Lower leg skin (tissue), 4 donors: ENCODE measurements at regions of chr1 and their contacts with region 1.

Region 1: DNA sequence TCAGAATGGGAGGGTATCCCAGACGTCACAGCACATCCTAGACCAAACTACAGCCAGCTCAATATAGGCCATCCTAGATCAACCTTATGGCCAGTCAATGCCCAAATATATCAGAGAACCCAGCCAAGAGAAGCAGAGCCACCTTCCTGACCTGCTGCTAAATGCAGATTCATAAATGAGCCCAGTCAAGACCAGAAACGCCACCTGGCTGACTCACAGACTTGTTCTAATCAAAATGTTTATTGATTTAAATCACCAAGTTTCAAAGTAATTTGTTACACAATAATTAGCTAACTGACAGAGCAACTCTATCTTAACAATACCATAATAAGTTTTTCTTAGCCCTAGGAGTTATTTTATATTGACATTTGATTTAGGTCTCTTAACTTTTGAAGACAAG is 28.6 kb downstream of the ZNF644 start:
- DNase-seq: no peak
- H3K4me3 ChIP-seq: no peak overlapping the region
- CTCF ChIP-seq: no peak
- POLR2A ChIP-seq: no peak

Region 2: GRCh38 chr1:90717665-90718410 is 275.4 kb before region 1 on chr1:
- intact Hi-C with region 1: loop called (anchors 2 kb)
- DNase-seq: no peak
- H3K4me3 ChIP-seq: peak overlapping the region; percentile 15
- CTCF ChIP-seq: no peak
- POLR2A ChIP-seq: no peak

Region 3: DNA sequence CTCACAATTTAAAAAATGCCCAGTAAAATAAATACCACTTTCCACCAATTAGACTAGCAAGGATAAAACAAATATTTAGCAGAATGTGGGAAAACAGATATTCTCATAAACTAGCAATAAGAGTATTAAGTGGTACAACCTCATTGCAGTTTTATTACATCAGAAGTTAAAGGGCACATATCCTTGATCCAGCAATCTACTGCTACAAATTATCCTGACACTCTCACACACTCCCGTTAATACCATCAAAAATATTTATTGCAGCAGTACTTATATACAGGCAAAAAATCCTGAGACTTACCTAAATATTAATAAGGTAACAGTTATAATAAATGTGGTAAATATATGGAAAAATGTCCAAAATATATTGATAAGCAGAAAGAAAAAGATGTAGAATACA is 15.7 kb before region 1 on chr1:
- intact Hi-C with region 1: no loop called
- DNase-seq: no peak
- H3K4me3 ChIP-seq: no peak overlapping the region
- CTCF ChIP-seq: no peak
- POLR2A ChIP-seq: no peak